ENCODE measurements at regions of chr19 and their contacts with region 1.

Region 1: GRCh38 chr19:35812220-35813042 is at the start of gene PRODH2:
- DNase-seq: peak; percentile 87
- ATAC-seq: peak; percentile 92
- H3K4me3 ChIP-seq: peak within 1 kb of the TSS; percentile 86 to 98 (median 91)
- H3K27ac ChIP-seq: peak within 1 kb of the TSS; percentile 79
- H3K4me1 ChIP-seq: peaks cover 45% of the 10 kb centered on the region
- H3K27me3 ChIP-seq: no peaks in the 10 kb centered on the region; a peak in 1 of 5 replicates
- CTCF ChIP-seq: peak; percentile 69
- EP300 ChIP-seq: peak in 1 of 2 experiments; percentile 67; a peak in 2 of 4 replicates
- POLR2A ChIP-seq: peak; percentile 94 to 99
- RAD21 ChIP-seq: no peak; the same call in none of the 2 replicates
- total RNA-seq, gene PRODH2: 42.0 and 86.7 TPM in 2 replicates

Region 2: DNA sequence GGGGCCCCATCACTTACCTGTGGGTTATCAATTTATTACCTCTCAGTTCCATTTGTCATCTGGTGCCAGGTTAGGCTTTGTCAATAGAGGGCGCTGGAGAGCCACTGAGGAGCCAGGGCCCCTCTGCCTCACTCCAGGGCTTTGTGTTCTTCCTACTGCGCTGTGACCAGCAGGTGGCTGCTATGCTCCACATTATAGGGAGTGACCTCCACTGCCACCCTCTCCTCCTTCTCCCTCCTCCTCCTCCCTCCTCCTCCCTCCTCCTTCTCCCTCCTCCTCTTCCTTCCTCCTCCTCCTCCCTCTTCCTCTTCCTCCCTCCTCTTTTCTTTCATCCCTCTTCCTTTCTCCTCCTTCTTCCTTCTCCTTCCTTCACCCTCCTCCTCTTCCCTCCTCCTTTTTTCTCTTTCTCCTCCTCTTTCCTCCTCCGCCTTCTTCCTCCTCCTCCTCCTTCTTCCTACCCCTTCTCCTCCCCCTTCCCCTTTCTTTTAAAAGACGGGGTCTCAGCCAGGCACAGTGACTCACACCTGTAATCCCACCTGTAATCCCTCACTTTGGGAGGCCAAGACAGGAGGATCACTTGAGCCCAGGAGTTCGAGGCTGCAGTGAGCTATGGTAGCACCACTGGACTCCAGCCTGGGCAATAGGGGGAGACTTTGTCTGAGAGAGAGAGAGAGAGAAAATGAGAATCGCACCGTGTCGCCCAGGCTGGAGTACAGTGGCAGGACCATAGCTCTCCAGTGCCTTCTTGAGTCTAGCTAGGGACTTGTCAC is 118.4 kb before region 1 on chr19:
- CTCF ChIA-PET with region 1: no interaction called
- POLR2A ChIA-PET with region 1: no interaction called
- in situ Hi-C with region 1: loop called (anchors 10 kb)
- intact Hi-C with region 1: loop called (anchors 10 kb)
- DNase-seq: peak; percentile 81
- ATAC-seq: peak; percentile 96
- H3K4me3 ChIP-seq: no peak overlapping the region
- H3K27ac ChIP-seq: no peak overlapping the region
- H3K4me1 ChIP-seq: peaks cover 32% of the 10 kb centered on the region
- H3K27me3 ChIP-seq: no peaks in the 10 kb centered on the region
- CTCF ChIP-seq: peak; percentile 97
- EP300 ChIP-seq: no peak
- POLR2A ChIP-seq: no peak
- RAD21 ChIP-seq: peak; percentile 98

Region 3: GRCh38 chr19:35748106-35749020 is 64.1 kb before region 1 on chr19 and contains the start of gene LIN37:
- CTCF ChIA-PET with region 1: no interaction called
- POLR2A ChIA-PET with region 1: interaction called, 14 read pairs
- in situ Hi-C with region 1: no loop called
- intact Hi-C with region 1: no loop called
- DNase-seq: peak; percentile 99
- ATAC-seq: peak; percentile 91
- H3K4me3 ChIP-seq: peak within 1 kb of the TSS; percentile 89 to 100 (median 89)
- H3K27ac ChIP-seq: peak within 1 kb of the TSS; percentile 68
- H3K4me1 ChIP-seq: peaks cover 41% of the 10 kb centered on the region
- H3K27me3 ChIP-seq: no peaks in the 10 kb centered on the region; a peak in 1 of 5 replicates
- CTCF ChIP-seq: no peak
- EP300 ChIP-seq: no peak
- POLR2A ChIP-seq: peak; percentile 83 to 93
- RAD21 ChIP-seq: no peak
- total RNA-seq, gene LIN37: 3.5 and 6.3 TPM in 2 replicates

Region 4: DNA sequence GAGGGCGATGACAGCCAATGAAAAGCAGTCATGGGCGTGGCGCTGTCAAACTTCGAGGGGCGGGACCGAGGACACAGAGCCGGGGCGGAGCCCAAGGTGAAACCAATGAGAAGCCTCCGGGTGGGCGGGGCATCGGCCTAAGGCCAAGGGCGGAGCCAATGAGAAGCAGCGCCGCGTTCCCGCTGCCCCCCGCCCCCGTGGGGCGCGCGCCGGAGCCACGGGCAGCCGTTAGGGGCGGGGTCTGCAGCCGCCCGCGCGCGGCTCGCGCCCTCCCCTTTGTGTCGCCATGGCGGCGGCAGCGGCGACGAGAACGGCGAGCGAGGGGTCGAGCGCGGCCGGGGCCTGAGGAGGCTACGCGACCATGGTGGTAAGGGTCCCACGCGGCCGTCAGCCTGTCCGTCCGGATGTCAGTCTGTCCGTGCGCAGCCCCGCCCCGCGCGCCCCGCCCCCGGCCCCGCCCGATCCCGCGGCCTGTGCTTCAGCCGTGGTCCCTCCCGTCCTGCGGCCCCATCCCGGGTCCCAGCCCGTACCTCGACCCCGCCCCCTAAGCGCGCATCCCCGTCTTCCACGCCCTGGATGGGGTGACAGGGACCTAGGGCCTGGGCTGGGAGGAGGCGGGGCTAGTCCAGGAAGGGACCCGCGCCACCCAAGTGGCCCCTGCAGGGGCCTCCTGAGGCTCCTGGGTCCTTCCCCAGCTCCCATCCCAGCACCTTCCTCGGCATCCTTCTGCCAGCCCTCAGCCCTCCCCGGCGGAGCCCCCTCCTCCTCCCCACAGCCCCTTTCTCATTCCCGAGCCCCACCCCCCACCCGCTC is 36.9 kb before region 1 on chr19 and contains the start of gene ARHGAP33:
- CTCF ChIA-PET with region 1: no interaction called
- POLR2A ChIA-PET with region 1: no interaction called
- in situ Hi-C with region 1: no loop called
- intact Hi-C with region 1: loop called (anchors 5 kb)
- DNase-seq: peak; percentile 94
- ATAC-seq: peak; percentile 88
- H3K4me3 ChIP-seq: peak within 1 kb of the TSS; percentile 62 to 78 (median 75)
- H3K27ac ChIP-seq: no peak within 1 kb of the TSS
- H3K4me1 ChIP-seq: peaks cover 43% of the 10 kb centered on the region
- H3K27me3 ChIP-seq: no peaks in the 10 kb centered on the region
- CTCF ChIP-seq: no peak
- EP300 ChIP-seq: no peak
- POLR2A ChIP-seq: no peak; a peak in 1 of 4 replicates
- RAD21 ChIP-seq: no peak
- total RNA-seq, gene ARHGAP33: 0.83 and 1.3 TPM in 2 replicates

Region 5: GRCh38 chr19:35801828-35802227 is 10.6 kb before region 1 on chr19:
- CTCF ChIA-PET with region 1: no interaction called
- POLR2A ChIA-PET with region 1: interaction called, 13 read pairs
- in situ Hi-C with region 1: no loop called
- intact Hi-C with region 1: no loop called
- DNase-seq: no peak
- ATAC-seq: no peak
- H3K4me3 ChIP-seq: no peak overlapping the region
- H3K27ac ChIP-seq: no peak overlapping the region
- H3K4me1 ChIP-seq: peaks cover 11% of the 10 kb centered on the region
- H3K27me3 ChIP-seq: no peaks in the 10 kb centered on the region
- CTCF ChIP-seq: no peak
- EP300 ChIP-seq: no peak
- POLR2A ChIP-seq: no peak
- RAD21 ChIP-seq: no peak

Region 6: GRCh38 chr19:35860818-35861639 is 48.6 kb after region 1 on chr19:
- CTCF ChIA-PET with region 1: no interaction called
- POLR2A ChIA-PET with region 1: interaction called, 4 read pairs
- in situ Hi-C with region 1: no loop called
- intact Hi-C with region 1: loop called (anchors 5 kb)
- DNase-seq: peak; percentile 89
- ATAC-seq: peak; percentile 92
- H3K4me3 ChIP-seq: peak overlapping the region; percentile 41 to 70 (median 50)
- H3K27ac ChIP-seq: no peak overlapping the region
- H3K4me1 ChIP-seq: peaks cover 39% of the 10 kb centered on the region
- H3K27me3 ChIP-seq: peaks cover 6 to 39% of the 10 kb centered on the region in 2 experiments
- CTCF ChIP-seq: no peak
- EP300 ChIP-seq: no peak
- POLR2A ChIP-seq: 0 out of 4 replicates have a peak, but pooled peaks of 1 of the 2 experiments have one; percentile 27
- RAD21 ChIP-seq: no peak

Region 7: DNA sequence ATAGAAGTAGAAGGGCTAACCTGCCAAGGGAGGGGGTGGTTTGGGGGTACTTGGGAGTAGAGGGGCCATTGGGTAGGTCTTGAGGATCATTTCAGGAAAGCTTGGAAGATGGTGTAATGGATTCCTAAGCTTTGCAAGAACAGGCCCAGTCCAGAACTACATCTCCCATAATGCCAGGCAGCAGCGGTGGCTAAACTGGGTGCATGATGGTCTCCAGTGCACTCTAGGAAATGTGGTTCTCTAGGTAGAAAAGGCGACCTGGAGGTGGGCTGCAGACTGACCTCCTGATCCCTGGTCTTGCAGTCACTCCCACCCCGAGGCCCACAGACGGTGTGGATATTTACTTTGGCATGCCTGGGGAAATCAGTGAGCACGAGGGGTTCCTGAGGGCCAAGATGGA is 59.7 kb after region 1 on chr19:
- CTCF ChIA-PET with region 1: no interaction called
- POLR2A ChIA-PET with region 1: no interaction called
- in situ Hi-C with region 1: no loop called
- intact Hi-C with region 1: no loop called
- DNase-seq: no peak
- ATAC-seq: no peak
- H3K4me3 ChIP-seq: no peak overlapping the region
- H3K27ac ChIP-seq: no peak overlapping the region
- H3K4me1 ChIP-seq: peaks cover 16% of the 10 kb centered on the region
- H3K27me3 ChIP-seq: no peaks in the 10 kb centered on the region; a peak in 2 of 5 replicates
- CTCF ChIP-seq: no peak
- EP300 ChIP-seq: no peak
- POLR2A ChIP-seq: no peak
- RAD21 ChIP-seq: no peak

Region 8: GRCh38 chr19:35931161-35931873 is 118.9 kb after region 1 on chr19:
- CTCF ChIA-PET with region 1: no interaction called
- POLR2A ChIA-PET with region 1: interaction called, 3 read pairs
- in situ Hi-C with region 1: no loop called
- intact Hi-C with region 1: loop called (anchors 1 kb)
- DNase-seq: peak; percentile 98
- ATAC-seq: peak; percentile 97
- H3K4me3 ChIP-seq: peak overlapping the region; percentile 7 to 61 (median 38); a peak in 4 of 6 replicates
- H3K27ac ChIP-seq: no peak overlapping the region
- H3K4me1 ChIP-seq: peaks cover 21% of the 10 kb centered on the region
- H3K27me3 ChIP-seq: no peaks in the 10 kb centered on the region; a peak in 2 of 5 replicates
- CTCF ChIP-seq: peak; percentile 100
- EP300 ChIP-seq: no peak; a peak in 1 of 4 replicates
- POLR2A ChIP-seq: peak; percentile 73 to 98
- RAD21 ChIP-seq: peak; percentile 99